A549 (cell line): ENCODE measurements at regions of chr17 and their contacts with region 1.

Region 1: DNA sequence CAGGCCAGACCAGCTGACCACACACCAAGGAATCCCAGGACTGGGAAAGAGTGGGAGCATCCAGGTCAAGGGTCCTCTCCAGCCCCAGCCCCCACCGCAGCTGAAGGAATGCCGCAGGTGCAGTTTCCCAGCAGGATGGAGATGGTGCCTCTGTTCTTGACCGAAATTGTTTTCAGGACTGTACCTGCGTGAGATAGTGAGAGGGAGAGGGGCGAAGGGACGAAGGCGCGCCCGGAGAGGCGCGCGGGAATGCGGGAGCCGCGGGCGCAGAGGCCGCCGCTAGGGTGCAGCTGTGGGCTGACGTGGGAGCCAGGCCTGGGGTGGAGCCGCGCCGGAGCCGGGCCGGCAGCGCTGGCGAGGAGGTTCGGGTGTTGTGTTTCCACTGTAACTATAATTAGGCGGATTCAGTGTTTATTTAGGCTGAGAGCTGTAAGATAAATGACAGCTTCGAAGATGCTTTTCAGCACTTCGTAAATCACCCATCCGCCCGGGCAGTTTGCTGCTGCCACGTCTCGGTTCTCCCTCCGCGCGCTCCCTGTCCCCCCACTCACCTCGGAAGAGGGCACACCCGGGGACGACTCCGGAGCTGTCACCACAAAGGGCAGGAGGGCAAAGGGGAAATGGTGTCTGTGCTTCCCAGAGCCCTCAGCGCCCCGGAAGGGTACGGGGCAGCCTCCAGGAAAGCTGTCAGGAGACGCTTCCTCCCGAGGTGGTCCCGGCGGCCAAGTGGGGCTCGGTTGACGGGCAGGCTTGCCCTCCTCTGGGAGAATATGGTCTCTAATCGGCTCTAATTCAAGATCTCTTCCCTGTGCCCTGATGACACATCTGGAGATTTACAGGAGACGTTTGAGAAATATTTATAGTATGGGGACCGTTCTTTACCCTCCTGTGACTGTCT is 38.2 kb downstream of the HOXB1 start:
- DNase-seq: peak; percentile 66 to 85
- ATAC-seq: peak; percentile 96 to 98
- H3K4me3 ChIP-seq: peak overlapping the region; percentile 25
- H3K27ac ChIP-seq: peak overlapping the region; percentile 43 to 72
- H3K4me1 ChIP-seq: peaks cover 14% of the 10 kb centered on the region; the same call in 2 of the 3 replicates
- CTCF ChIP-seq: peak; percentile 92
- EP300 ChIP-seq: no peak
- POLR2A ChIP-seq: no peak
- RAD21 ChIP-seq: peak; percentile 83 to 96

Region 2: GRCh38 chr17:48463526-48463925 is 29.1 kb before region 1 on chr17:
- CTCF ChIA-PET with region 1: interaction called, 13 read pairs
- POLR2A ChIA-PET with region 1: no interaction called
- DNase-seq: no peak
- ATAC-seq: no peak
- H3K4me3 ChIP-seq: no peak overlapping the region
- H3K27ac ChIP-seq: no peak overlapping the region
- H3K4me1 ChIP-seq: no peaks in the 10 kb centered on the region
- CTCF ChIP-seq: no peak
- EP300 ChIP-seq: no peak
- POLR2A ChIP-seq: no peak
- RAD21 ChIP-seq: no peak

Region 3: DNA sequence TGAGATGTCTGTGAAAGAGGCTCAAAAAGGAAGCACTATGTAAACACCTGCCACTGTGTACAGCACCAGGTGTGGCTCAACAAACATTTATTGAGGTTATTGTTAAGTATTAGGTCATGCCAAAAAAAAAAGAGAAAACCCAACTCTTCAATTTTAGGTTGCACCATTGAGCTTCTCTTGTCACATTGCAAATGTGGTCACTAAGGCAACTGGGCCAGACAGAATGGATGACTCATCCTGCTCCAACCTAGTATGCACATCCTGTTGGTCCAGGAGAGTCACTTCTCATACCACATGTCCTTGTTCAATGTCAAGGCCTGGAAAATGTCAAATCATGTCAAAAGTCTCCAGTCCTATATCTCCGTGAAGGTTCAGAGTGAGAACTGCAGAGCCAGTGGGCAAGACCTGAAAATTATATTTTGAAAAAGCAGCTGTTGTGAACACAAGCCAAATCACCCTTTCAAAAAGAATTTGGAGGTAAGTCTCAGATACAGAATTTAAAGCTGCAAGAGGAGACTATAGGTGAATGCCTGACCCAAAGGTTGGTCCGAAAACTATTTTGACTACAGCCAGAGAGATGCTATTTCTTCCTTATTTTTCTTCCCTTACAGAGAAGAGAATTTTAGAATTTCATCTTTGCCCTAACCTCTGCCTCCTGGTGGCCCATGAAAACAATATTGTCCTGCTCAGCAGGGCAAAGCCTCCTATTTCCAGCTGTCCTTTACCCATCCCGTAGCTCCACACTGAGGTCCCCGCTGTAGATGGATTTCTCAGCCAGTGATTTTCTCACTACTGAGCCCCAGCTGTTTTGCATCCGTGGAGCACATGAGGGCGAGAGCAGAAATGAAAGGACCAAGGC is 13.4 kb after region 1 on chr17:
- CTCF ChIA-PET with region 1: interaction called, 41 read pairs
- POLR2A ChIA-PET with region 1: no interaction called
- DNase-seq: peak; percentile 78 to 89
- ATAC-seq: peak; percentile 86 to 94
- H3K4me3 ChIP-seq: no peak overlapping the region
- H3K27ac ChIP-seq: peak overlapping the region; percentile 16 to 47
- H3K4me1 ChIP-seq: peaks cover 24% of the 10 kb centered on the region
- CTCF ChIP-seq: no peak; the same call in 2 of the 3 replicates
- EP300 ChIP-seq: no peak
- POLR2A ChIP-seq: no peak
- RAD21 ChIP-seq: no peak; a peak in 1 of 5 replicates

Region 4: GRCh38 chr17:48520631-48521079 is 28.0 kb after region 1 on chr17:
- CTCF ChIA-PET with region 1: interaction called, 11 read pairs
- POLR2A ChIA-PET with region 1: no interaction called
- DNase-seq: peak in 1 of 2 experiments; percentile 84
- ATAC-seq: peak in 1 of 2 experiments; percentile 39; a peak in 3 of 6 replicates
- H3K4me3 ChIP-seq: no peak overlapping the region
- H3K27ac ChIP-seq: peak overlapping the region; percentile 77 to 80
- H3K4me1 ChIP-seq: peaks cover 57% of the 10 kb centered on the region
- CTCF ChIP-seq: no peak
- EP300 ChIP-seq: no peak
- POLR2A ChIP-seq: no peak
- RAD21 ChIP-seq: no peak

Region 5: DNA sequence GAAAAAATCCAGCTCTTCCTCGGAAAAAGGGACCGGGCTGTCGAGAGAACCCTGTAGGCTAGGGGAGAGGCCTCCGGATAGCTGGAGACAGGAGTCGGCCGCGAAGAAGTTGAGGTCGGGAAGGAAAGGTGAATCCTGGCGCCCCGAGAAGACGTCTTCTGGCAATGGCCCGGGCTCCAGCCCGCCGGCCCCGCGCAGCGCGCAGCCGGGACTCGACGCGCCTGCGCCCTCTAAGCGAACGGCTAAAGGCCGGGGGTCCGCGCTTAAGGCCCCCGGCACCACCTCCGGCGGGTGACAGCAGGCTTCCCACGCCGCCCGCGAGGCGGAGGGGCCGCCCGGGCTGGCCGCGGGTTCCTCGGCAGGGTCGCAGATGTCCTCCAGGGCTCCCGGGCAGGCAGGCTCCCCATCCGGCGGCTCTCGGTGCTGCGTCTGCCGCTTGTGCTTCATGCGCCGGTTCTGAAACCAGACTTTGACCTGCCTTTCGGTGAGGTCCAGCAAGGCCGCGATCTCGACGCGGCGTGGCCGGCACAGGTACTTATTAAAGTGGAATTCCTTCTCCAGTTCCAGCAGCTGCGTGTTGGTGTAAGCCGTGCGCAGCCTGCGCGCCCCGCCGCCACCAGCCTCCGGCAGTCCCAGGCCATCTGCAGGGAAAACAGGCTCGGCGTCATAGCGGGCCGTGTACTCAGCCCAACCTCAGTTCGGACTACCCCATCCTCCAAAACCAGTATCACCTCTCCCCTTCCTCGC is 50.6 kb after region 1 on chr17:
- CTCF ChIA-PET with region 1: interaction called, 13 read pairs
- POLR2A ChIA-PET with region 1: no interaction called
- DNase-seq: peak; percentile 75 to 79
- ATAC-seq: peak; percentile 89 to 92
- H3K4me3 ChIP-seq: peak overlapping the region; percentile 44
- H3K27ac ChIP-seq: peak overlapping the region; percentile 70 to 89
- H3K4me1 ChIP-seq: peaks cover 15% of the 10 kb centered on the region; the same call in 2 of the 3 replicates
- CTCF ChIP-seq: no peak
- EP300 ChIP-seq: no peak
- POLR2A ChIP-seq: peak; percentile 43
- RAD21 ChIP-seq: no peak

Region 6: DNA sequence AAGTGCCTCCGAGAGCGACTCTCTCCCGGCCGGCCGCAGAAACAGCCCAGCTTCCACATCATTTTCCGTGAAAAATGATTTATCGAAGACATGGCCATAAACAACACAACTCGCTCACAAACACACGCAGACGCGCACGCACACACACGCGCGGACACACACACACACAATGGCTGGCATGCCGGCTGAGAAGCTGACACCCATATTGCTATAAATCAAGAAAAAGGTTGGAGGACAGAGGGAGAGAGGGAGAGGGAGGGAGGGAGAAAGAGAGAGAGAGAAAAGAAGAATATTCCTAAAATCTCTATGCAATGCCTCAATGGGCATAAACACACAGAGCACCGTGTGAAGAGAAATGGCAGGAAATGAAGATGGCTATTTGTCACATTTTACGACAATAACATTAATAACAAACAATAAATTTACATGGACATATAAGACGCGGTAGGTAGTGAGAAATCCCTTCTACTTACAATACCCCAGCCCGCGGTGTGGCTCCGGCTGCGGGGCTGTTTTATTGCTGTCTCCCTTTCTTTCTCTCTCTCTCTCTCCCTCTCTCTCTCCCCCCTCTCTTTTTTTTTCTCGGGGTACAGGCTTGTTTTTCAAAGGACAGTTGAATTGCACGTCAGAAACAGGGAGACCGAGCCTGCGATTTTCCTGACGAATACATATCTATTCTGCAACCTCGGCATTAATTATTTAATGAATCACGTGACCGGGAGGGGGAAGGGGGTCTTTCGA is 76.0 kb after region 1 on chr17:
- CTCF ChIA-PET with region 1: interaction called, 13 read pairs
- POLR2A ChIA-PET with region 1: no interaction called
- DNase-seq: no peak
- ATAC-seq: no peak
- H3K4me3 ChIP-seq: no peak overlapping the region
- H3K27ac ChIP-seq: no peak overlapping the region
- H3K4me1 ChIP-seq: peaks cover 7% of the 10 kb centered on the region; the same call in 1 of the 3 replicates
- CTCF ChIP-seq: no peak
- EP300 ChIP-seq: no peak
- POLR2A ChIP-seq: no peak
- RAD21 ChIP-seq: no peak

Region 7: GRCh38 chr17:48646183-48647102 is 153.8 kb after region 1 on chr17:
- CTCF ChIA-PET with region 1: no interaction called
- POLR2A ChIA-PET with region 1: no interaction called
- DNase-seq: peak; percentile 64 to 80
- ATAC-seq: peak; percentile 76 to 79
- H3K4me3 ChIP-seq: peak overlapping the region; percentile 74
- H3K27ac ChIP-seq: peak overlapping the region; percentile 92 to 95
- H3K4me1 ChIP-seq: peaks cover 34% of the 10 kb centered on the region
- CTCF ChIP-seq: no peak
- EP300 ChIP-seq: no peak
- POLR2A ChIP-seq: peak; percentile 35
- RAD21 ChIP-seq: no peak